ENCODE measurements at regions of chr6 and their contacts with region 1.

Region 1: DNA sequence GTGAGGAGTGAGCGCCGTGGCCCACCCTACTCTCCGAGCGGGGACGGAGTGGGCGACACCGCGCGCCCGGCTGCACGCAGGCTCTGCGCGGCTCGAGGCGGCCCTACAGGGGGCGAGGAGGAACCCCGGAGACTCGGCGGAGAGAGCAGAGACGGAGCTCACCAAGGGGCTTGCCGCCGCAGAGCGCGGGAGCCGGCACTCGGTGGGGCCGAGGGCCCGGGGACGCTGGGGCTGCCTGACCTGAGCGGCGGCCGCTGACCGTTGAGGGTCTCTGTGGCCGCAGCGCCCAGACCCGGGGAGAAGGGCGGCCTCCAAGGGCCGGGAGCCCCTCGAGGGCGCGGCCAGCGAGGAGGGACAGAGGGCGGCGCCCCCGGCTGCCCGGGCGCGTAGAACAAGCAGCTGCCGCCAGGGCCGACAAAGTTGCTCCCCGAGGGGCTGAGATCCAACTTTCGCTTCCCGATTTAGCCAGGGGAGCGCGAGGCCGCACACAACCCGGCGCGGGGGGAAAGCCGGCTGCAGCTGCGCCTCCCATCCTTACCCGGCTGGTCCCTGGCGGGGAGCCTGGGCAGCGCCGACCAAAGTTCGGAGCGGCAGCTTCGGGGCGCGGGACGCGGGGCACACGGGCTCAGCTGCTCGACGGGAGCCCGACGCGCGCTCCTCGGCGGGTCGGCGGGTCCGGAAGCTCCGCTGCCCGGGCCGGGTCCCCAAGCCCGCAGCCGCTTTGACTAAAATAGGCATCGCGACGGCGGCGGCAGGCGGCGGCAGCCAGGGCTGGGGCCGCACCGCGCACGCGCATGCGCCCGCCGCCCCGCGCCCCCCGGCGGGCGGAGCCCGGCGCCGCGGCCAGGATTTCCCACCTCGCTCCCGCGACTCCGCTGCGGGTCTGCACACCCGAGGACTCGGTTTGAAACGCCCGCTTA is 43.1 kb downstream of the POPDC3 start:
- DNase-seq: peak; percentile 59
- ATAC-seq: peak; percentile 80
- H3K4me3 ChIP-seq: peak overlapping the region; percentile 86
- H3K27ac ChIP-seq: peak overlapping the region; percentile 42
- H3K4me1 ChIP-seq: no peaks in the 10 kb centered on the region
- H3K27me3 ChIP-seq: no peaks in the 10 kb centered on the region
- CTCF ChIP-seq: peak; percentile 29; the same call in 1 of the 2 replicates
- POLR2A ChIP-seq: no peak
- RAD21 ChIP-seq: no peak; the same call in none of the 2 replicates

Region 2: DNA sequence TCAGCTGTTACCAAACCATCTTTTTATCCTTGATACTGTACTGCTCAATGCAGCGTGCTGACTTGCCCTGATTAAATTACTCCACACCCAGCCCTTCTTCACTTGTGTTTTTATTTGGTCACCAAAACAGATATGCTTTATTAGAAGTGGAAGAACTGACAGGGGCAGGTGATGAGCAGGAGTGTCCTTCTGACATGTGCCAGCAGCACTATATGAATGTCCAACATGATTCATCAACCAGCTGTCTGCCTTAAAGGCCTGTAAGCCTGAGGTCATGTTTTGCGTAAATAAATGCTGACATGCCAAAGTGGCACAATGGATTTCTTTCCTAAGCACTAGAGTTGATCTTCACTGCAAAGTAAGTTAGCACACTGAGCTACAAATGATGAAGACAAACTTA is 27.7 kb after region 1 on chr6:
- CTCF ChIA-PET with region 1: no interaction called
- POLR2A ChIA-PET with region 1: no interaction called
- dilution Hi-C with region 1: no loop called
- in situ Hi-C with region 1: no loop called
- intact Hi-C with region 1: loop called (anchors 1 kb)
- DNase-seq: peak; percentile 53
- ATAC-seq: peak; percentile 49
- H3K4me3 ChIP-seq: no peak overlapping the region
- H3K27ac ChIP-seq: no peak overlapping the region
- H3K4me1 ChIP-seq: peaks cover 3% of the 10 kb centered on the region
- H3K27me3 ChIP-seq: no peaks in the 10 kb centered on the region
- CTCF ChIP-seq: no peak
- POLR2A ChIP-seq: no peak
- RAD21 ChIP-seq: no peak

Measured in IMR-90 (cell line).